ENCODE measurements at regions of chr4 and their contacts with region 1.

Region 1: DNA sequence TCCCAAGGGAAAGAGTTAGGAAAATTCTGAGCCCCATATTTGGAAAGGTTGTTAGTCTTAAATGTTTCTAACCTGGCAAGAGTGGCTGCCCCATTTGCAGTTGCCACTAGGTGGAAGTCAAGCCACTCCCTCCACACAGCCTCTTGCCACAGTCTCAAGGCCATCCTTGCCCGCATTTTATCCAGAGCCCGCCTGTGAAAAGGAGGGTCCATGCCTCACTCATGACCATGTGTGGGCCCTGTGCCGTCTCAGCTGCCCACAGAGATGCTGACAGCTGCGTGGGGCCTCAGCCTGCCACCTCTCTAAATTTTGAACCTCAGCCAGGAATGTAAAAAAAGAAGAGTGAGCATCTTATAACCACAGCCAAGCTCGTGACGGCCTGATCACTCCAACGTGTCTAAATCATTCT is 201.5 kb upstream of the FAM241A start:
- DNase-seq: no peak
- H3K4me3 ChIP-seq: no peak overlapping the region
- H3K27me3 ChIP-seq: no peaks in the 10 kb centered on the region
- CTCF ChIP-seq: peak; percentile 47

Region 2: DNA sequence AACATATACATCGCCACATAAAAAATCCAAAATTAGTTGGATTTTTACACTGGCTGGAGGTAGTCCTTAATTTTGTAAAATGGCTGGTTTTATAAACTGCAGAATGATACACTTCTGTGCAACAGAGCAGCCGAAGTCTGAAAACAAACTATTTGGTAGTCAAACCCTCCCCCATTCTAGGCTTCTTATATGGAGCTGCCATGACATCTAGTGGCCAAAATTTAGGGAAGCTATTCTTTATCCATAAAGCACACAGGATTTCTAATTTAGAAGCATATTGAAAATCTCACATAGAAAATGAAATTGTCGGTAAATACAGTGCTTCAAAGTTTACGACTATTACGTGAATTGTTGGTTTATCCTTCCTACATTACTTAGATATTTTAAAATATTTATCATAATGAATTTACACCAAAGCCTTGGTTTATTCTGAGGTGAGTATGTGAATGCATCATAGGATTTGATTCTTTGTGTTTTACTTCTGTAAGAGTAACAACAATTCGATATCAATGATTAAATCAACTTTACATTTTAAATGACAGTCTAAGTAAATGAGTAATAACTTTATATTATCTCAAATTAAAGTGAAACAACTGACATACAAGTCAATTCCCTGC is 88.0 kb after region 1 on chr4:
- CTCF ChIA-PET with region 1: interaction called, 13 read pairs
- POLR2A ChIA-PET with region 1: no interaction called
- DNase-seq: no peak
- H3K4me3 ChIP-seq: no peak overlapping the region
- H3K27me3 ChIP-seq: 0 out of 2 replicates have a peak, but pooled peaks cover 1% of the 10 kb centered on the region
- CTCF ChIP-seq: peak; percentile 70

Measured in BJ (cell line).